ENCODE measurements at regions of chr17 and their contacts with region 1.

Region 1: GRCh38 chr17:59004338-59005111 is 102.2 kb downstream of the TRIM37 start:
- DNase-seq: peak in 2 of 3 donors; percentile 35 to 73
- ATAC-seq: peak; percentile 80 to 88 (median 86)
- H3K4me3 ChIP-seq: no peak overlapping the region
- H3K27ac ChIP-seq: peak overlapping the region; percentile 33 to 69 (median 69)
- H3K4me1 ChIP-seq: peaks cover 0 to 58% (median 21%) of the 10 kb centered on the region in 4 donors
- H3K27me3 ChIP-seq: no peaks in the 10 kb centered on the region
- CTCF ChIP-seq: peak; percentile 92 to 99 (median 96)
- POLR2A ChIP-seq: no peak

Region 2: GRCh38 chr17:58710936-58711775 is 293.4 kb before region 1 on chr17:
- intact Hi-C with region 1: loop called in 1 of 2 experiments (anchors 10 kb)
- DNase-seq: peak in 1 of 3 donors; percentile 52
- ATAC-seq: peak; percentile 55 to 72 (median 64)
- H3K4me3 ChIP-seq: no peak overlapping the region
- H3K27ac ChIP-seq: no peak overlapping the region
- H3K4me1 ChIP-seq: no peaks in the 10 kb centered on the region
- H3K27me3 ChIP-seq: no peaks in the 10 kb centered on the region
- CTCF ChIP-seq: peak; percentile 75 to 85 (median 78)
- POLR2A ChIP-seq: no peak

Region 3: DNA sequence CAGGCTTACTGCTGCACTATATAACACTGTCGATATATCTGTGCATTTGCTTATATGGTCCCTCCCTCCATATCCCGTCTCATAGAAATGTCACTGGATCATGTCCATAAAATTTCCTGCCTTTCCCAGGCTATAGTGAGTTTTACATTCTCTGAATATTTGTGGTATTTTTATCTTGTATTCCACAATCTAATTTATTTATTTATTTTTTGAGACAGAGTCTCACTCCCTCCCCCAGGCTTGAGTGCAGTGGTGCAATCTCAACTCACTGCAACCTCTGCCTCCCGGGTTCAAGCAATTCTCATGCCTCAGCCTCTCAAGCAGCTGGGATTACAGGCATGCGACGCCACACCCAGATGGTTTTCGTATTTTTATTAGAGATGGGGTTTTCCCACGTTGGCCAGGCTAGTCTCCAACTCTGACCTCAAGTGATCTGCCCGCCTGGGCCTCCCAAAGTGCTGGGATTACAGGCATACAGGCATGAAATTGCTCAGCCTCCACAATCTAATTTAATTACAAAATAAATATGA is 89.2 kb after region 1 on chr17:
- intact Hi-C with region 1: no loop called
- DNase-seq: no peak
- ATAC-seq: no peak
- H3K4me3 ChIP-seq: no peak overlapping the region
- H3K27ac ChIP-seq: no peak overlapping the region
- H3K4me1 ChIP-seq: no peaks in the 10 kb centered on the region
- H3K27me3 ChIP-seq: no peaks in the 10 kb centered on the region
- CTCF ChIP-seq: no peak
- POLR2A ChIP-seq: no peak

Region 4: GRCh38 chr17:59199398-59199797 is 194.9 kb after region 1 on chr17:
- intact Hi-C with region 1: no loop called
- DNase-seq: no peak
- ATAC-seq: no peak
- H3K4me3 ChIP-seq: no peak overlapping the region
- H3K27ac ChIP-seq: no peak overlapping the region
- H3K4me1 ChIP-seq: no peaks in the 10 kb centered on the region
- H3K27me3 ChIP-seq: no peaks in the 10 kb centered on the region
- CTCF ChIP-seq: no peak
- POLR2A ChIP-seq: no peak

Region 5: GRCh38 chr17:59406808-59407429 is 402.4 kb after region 1 on chr17:
- intact Hi-C with region 1: no loop called
- DNase-seq: no peak
- ATAC-seq: peak in 1 of 4 donors; percentile 28
- H3K4me3 ChIP-seq: no peak overlapping the region
- H3K27ac ChIP-seq: no peak overlapping the region
- H3K4me1 ChIP-seq: peaks cover 0 to 4% (median 2%) of the 10 kb centered on the region in 4 donors
- H3K27me3 ChIP-seq: no peaks in the 10 kb centered on the region
- CTCF ChIP-seq: no peak
- POLR2A ChIP-seq: no peak